Activated CD8-positive, alpha-beta T cell treated with anti-CD3 and anti-CD28 coated beads, Interleukin-2, amount 10 ng/mL, durations not matched to agents 7 days and 5 days (primary cell): ENCODE measurements at regions of chr13 and their contacts with region 1.

Region 1: GRCh38 chr13:99214232-99214631 is 13.6 kb downstream of the UBAC2 start:
- DNase-seq: peak; percentile 52
- ATAC-seq: peak; percentile 20
- H3K4me3 Mint-ChIP-seq: peak overlapping the region; percentile 76
- H3K27ac Mint-ChIP-seq: peak overlapping the region; percentile 93
- H3K4me1 Mint-ChIP-seq: peaks cover 73% of the 10 kb centered on the region
- H3K27me3 Mint-ChIP-seq: no peaks in the 10 kb centered on the region

Region 2: DNA sequence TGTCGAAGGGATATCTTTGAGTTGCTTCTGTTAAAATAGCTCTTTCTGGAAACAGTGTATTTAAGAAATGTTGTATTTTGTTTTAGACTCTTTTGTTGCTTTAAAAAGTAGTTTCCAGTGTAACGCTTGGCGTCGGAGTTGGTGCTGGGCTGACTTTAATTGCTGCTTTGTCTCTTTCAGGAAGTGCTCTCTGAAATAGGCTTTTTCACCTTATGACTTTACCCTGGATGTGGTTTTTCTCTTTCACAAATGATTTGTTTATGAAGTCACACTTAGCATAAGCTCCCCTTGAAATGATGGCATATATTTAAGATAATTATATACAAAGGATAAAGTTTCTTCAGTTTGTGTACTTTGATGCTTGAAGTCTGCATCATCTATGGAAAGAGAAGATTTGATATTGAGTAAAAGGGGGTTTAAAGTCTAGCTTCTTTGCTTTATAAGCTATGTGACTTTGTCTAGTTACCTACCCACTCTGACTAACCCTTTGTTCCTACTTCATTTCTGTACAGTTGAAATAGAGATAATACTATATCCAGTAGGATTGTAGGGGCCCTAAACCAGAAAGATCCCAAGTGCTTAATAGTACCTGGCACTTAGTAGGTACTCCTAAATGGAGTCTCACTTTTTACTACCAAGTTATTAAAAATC is 44.1 kb after region 1 on chr13 and contains the start of gene GPR18:
- CTCF ChIA-PET with region 1: interaction called, 7 read pairs
- POLR2A ChIA-PET with region 1: interaction called, 16 read pairs
- DNase-seq: peak; percentile 65
- ATAC-seq: peak; percentile 76
- H3K4me3 Mint-ChIP-seq: peak within 1 kb of the TSS; percentile 83
- H3K27ac Mint-ChIP-seq: peak within 1 kb of the TSS; percentile 94
- H3K4me1 Mint-ChIP-seq: peaks cover 65% of the 10 kb centered on the region
- H3K27me3 Mint-ChIP-seq: no peaks in the 10 kb centered on the region
- total RNA-seq, gene GPR18: 16.2 to 16.6 TPM